Aorta (tissue), 5 donors: ENCODE measurements at regions of chr6 and their contacts with region 1.

Region 1: DNA sequence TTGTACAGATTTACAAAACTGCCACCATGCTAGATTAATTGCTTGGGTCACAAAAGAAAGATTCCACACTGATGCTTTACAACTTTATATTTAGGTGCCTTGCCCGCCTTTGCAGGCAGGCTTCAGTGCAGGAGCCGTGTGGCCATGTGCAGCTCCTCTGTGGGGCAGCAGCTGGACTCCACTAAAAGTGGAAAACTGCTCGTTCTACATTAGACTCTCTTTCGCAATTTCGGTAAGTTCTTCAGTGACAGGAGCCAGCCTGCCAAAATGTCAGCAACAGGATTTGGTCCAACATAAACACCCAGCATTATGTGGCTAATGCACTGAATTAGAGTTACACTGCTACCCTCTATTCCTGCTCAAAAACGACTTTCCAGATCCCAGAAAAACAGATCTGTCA is 174.4 kb upstream of the KCNK16 start:
- DNase-seq: peak in 1 of 2 donors; percentile 74
- ATAC-seq: peak; percentile 85
- H3K4me3 ChIP-seq: no peak overlapping the region
- H3K27ac ChIP-seq: no peak overlapping the region
- H3K4me1 ChIP-seq: no peaks in the 10 kb centered on the region
- H3K27me3 ChIP-seq: peaks cover 0 to 1% of the 10 kb centered on the region in 2 donors

Region 2: GRCh38 chr6:39189915-39190544 is 306.9 kb before region 1 on chr6:
- intact Hi-C with region 1: no loop called
- DNase-seq: peak; percentile 63 to 76
- ATAC-seq: peak; percentile 73
- H3K4me3 ChIP-seq: no peak overlapping the region
- H3K27ac ChIP-seq: no peak overlapping the region
- H3K4me1 ChIP-seq: no peaks in the 10 kb centered on the region
- H3K27me3 ChIP-seq: no peaks in the 10 kb centered on the region

Region 3: DNA sequence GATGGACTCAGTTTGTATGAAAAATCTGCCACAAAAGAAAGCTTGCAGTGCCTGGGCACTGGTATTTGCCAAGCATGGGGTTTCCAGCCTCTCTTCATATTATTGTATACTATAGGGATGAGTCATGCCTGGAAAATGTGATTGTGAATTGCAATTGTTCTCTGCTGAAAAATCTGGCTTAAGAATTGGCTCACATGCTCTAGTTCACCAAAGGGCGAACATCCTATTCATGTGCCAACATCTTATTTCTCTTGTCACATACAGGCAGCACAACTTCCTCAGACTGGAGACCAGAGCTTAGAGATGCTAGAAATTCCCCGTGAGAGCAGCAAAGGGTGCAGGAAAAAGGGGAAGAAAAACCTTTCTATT is 70.8 kb before region 1 on chr6:
- intact Hi-C with region 1: loop called in 1 of 2 experiments (anchors 10 kb)
- DNase-seq: no peak
- ATAC-seq: no peak
- H3K4me3 ChIP-seq: no peak overlapping the region
- H3K27ac ChIP-seq: no peak overlapping the region
- H3K4me1 ChIP-seq: peaks cover 0 to 3% of the 10 kb centered on the region in 2 donors
- H3K27me3 ChIP-seq: no peaks in the 10 kb centered on the region

Region 4: GRCh38 chr6:39617026-39617425 is 120.1 kb after region 1 on chr6:
- intact Hi-C with region 1: no loop called
- DNase-seq: no peak
- ATAC-seq: no peak
- H3K4me3 ChIP-seq: no peak overlapping the region
- H3K27ac ChIP-seq: no peak overlapping the region
- H3K4me1 ChIP-seq: no peaks in the 10 kb centered on the region
- H3K27me3 ChIP-seq: no peaks in the 10 kb centered on the region

Region 5: DNA sequence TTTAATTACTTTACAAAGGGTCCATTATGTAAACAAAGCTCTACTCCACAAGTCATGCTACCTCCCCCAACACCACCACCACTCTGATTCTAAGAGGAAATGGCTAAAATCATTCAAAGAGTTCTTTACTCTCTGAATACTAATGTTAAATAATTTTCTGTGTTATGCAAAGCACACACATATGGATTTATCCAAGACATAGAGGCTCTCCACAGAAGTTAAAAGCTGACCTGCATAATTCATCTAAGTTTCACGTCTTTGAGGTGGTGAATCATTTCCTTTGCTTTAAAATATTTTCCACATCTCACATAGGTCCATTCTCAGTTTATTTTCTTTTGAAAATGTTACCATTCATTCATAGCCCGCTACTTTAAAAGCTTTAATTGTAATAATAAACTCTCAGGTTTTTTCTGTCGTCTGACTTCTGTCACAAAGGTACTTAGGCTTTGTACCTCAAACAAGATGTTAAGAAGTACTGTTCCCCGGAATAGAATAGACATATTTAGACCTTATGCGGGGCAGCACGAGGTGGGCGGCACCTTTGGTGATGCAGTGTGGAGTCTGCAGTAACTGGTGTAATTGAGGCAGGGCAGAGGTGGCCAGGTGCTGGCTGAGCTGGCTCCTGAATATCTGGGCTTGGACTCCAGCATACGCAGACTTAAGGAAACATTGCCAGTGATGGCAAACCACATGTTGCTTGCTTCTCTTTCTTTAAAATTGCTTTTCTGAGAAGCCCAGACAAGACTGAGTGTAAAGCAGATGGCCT is 172.5 kb after region 1 on chr6:
- intact Hi-C with region 1: no loop called
- DNase-seq: no peak
- ATAC-seq: no peak
- H3K4me3 ChIP-seq: no peak overlapping the region
- H3K27ac ChIP-seq: no peak overlapping the region
- H3K4me1 ChIP-seq: no peaks in the 10 kb centered on the region
- H3K27me3 ChIP-seq: peaks cover 3% of the 10 kb centered on the region in 2 donors

Region 6: GRCh38 chr6:39961178-39961577 is 464.3 kb after region 1 on chr6:
- intact Hi-C with region 1: no loop called
- DNase-seq: no peak
- ATAC-seq: no peak
- H3K4me3 ChIP-seq: no peak overlapping the region
- H3K27ac ChIP-seq: no peak overlapping the region
- H3K4me1 ChIP-seq: no peaks in the 10 kb centered on the region
- H3K27me3 ChIP-seq: peaks cover 0 to 2% of the 10 kb centered on the region in 2 donors